Right ventricle myocardium inferior (tissue), 1 donor: ENCODE measurements at regions of chr15 and their contacts with region 1.

Region 1: DNA sequence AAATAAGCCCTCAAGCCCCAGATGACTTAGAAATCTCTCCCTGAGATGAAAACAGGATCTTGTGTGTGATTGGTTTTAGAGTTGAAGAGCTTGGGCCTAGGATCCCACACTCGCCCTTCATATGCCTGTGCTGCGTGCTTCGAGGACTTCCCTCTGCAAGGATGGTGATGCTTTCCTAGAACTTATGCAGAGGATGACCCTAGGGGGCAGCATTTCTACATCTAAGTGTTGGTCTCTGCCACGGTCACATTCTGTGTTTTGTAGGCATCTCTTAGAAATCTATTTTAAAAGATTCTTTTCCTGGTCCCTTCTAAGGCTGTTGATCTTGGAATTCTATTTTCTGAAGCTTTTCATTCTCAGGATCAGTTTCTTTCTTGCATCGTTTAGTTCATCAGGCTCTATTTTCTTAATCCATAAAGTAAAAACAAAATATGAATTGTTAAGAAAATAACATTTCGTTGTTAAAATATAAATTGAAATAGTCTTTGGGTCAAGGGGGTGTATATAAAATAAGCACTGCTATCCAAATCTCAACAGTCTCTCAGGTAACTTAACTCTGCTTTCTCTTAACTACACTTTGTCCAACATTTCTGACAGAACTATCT is 45.7 kb downstream of the WDR76 start:
- DNase-seq: no peak
- ATAC-seq: peak; percentile 64

Region 2: DNA sequence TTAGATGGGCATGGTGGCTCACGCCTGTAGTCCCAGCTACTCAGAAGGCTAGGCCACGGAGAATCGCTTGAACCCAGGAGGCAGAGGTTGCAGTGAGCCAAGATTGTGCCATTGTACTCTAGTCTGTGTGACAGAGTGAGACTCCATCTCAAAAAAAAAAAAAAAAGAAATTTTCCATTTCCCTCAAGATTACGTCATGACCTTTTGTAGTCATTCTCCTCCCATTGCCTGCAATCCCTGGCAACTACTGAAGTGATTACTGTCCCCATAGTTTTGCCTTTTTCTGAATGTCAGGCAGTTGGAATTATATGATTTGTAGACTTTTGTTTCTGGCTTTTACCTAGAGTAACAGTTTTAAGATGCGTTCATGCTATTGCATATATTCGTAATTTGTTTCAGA is 17.7 kb before region 1 on chr15:
- intact Hi-C with region 1: no loop called
- DNase-seq: no peak
- ATAC-seq: no peak

Region 3: GRCh38 chr15:44066316-44066740 is 193.8 kb after region 1 on chr15:
- intact Hi-C with region 1: loop called (anchors 10 kb)
- DNase-seq: no peak
- ATAC-seq: no peak

Region 4: GRCh38 chr15:44215594-44215993 is 343.1 kb after region 1 on chr15:
- intact Hi-C with region 1: loop called (anchors 10 kb)
- DNase-seq: no peak
- ATAC-seq: no peak